Dendritic cell treated with granulocyte-macrophage colony-stimulating factor and Interleukin-4, amounts not matched to agents 40 ng/mL and 50 ng/mL, for 4 days (primary cell): ENCODE measurements at regions of chr2 and their contacts with region 1.

Region 1: DNA sequence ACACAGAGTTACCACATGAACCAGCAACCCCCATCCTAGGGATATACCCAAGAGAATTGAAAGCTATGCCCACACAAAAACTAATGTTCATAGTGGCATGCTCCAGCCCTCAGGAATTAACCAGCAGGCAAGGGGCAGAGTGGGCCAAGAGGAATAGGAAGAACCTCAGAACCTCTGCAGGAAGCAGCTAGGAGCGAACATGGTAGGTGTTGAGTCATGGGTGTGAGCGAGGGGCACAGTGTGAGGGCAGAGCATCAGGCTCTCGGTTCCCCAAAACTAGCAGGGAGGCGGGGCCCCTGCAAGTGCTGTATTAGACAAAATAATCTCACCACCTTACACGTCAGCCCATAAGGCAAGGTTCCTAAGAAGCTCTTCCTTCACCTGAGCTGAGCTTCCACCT is 5.6 kb upstream of the RUFY4 start:
- H3K4me3 Mint-ChIP-seq: peak overlapping the region; percentile 84
- H3K27ac Mint-ChIP-seq: peak overlapping the region; percentile 93
- H3K4me1 Mint-ChIP-seq: peaks cover 89% of the 10 kb centered on the region
- H3K27me3 Mint-ChIP-seq: no peaks in the 10 kb centered on the region

Region 2: DNA sequence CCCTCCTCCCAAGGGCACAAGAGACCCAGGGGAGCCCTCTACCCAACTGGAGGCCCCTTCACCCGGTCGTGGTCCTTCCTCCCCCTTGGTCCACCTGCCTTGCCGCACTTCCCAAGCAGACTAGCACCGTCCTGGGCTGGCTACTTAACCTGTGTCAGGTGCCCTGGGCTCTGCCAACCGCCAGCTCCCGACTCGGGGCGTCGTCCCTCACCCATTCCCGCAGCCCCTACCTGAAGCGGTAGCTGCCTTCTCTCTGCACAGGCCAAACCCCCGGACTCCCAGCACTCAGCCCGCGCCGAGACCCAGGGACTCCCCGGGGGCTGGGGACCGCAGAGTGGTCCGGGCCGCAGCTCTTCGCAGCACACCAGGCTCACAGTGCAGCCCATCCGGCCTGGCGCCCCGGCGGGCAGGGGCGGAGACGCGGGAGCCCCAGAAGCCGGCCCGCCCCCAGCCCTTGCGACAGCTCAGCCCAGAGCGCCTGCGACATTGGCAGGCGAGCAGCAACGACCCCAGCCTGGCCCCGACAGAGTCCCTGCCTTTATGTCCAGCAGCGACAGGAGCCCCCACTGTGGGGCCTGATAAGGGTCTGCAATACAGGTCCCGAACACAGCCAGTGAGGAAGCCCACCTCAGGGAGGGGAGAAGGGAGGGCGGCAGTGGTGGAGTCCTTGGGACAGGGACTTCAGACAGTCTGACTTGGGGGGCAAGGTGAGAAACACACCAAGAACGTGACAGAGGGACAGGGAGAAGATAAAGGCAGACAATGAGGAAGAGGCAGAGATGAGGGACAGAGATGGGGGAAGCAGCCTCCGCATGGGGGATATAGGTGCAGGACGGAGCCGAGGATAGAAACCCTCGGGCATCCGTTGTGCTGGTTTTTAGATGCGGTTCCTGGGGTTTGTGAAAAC is 29.6 kb before region 1 on chr2:
- intact Hi-C with region 1: loop called (anchors 1 kb)
- H3K4me3 Mint-ChIP-seq: peak overlapping the region; percentile 75
- H3K27ac Mint-ChIP-seq: peak overlapping the region; percentile 83
- H3K4me1 Mint-ChIP-seq: peaks cover 44% of the 10 kb centered on the region
- H3K27me3 Mint-ChIP-seq: peaks cover 9% of the 10 kb centered on the region

Region 3: DNA sequence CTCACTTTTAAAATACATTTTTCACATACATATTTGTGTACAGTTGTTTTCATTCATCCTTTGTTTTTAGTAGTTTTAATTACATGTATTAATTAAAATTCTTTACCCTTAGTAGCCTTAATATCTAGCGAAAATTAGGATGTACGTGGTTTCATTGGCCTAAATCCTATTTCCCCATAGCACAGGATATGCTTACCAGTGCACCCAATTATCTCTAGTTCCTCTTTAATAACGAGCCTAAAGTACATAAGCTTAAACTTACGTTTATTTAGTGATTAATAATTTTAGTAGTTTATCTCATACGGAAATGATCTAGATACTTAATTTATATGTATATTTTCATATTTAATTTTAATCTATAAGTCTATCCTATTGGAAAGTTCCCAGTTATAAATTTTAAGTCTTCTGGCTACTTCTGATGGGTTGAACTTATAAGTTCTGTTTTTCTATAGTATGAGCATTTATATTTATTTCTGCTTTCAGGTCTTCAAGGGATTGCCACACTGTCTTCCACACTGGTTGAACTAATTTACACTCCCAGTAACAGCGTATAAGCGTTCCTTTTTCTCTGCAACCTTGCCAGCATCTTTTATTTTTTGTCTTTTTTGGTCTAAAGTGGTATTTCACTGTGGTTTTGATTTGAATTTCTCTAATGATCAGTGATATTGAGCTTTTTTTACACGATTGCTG is 15.8 kb before region 1 on chr2:
- intact Hi-C with region 1: loop called (anchors 2 kb)
- H3K4me3 Mint-ChIP-seq: peak overlapping the region; percentile 57
- H3K27ac Mint-ChIP-seq: peak overlapping the region; percentile 83
- H3K4me1 Mint-ChIP-seq: peaks cover 70% of the 10 kb centered on the region
- H3K27me3 Mint-ChIP-seq: no peaks in the 10 kb centered on the region